Astrocyte of the cerebellum (primary cell): ENCODE measurements at regions of chr11 and their contacts with region 1.

Region 1: GRCh38 chr11:21892736-21893564 is 299.9 kb upstream of the ANO5 start:
- DNase-seq: no peak
- H3K4me3 ChIP-seq: no peak overlapping the region
- CTCF ChIP-seq: no peak

Region 2: GRCh38 chr11:21839796-21840195 is 53.2 kb before region 1 on chr11:
- in situ Hi-C with region 1: loop called (anchors 5 kb)
- DNase-seq: no peak
- H3K4me3 ChIP-seq: no peak overlapping the region
- CTCF ChIP-seq: no peak